ENCODE measurements at regions of chr19 and their contacts with region 1.

Region 1: DNA sequence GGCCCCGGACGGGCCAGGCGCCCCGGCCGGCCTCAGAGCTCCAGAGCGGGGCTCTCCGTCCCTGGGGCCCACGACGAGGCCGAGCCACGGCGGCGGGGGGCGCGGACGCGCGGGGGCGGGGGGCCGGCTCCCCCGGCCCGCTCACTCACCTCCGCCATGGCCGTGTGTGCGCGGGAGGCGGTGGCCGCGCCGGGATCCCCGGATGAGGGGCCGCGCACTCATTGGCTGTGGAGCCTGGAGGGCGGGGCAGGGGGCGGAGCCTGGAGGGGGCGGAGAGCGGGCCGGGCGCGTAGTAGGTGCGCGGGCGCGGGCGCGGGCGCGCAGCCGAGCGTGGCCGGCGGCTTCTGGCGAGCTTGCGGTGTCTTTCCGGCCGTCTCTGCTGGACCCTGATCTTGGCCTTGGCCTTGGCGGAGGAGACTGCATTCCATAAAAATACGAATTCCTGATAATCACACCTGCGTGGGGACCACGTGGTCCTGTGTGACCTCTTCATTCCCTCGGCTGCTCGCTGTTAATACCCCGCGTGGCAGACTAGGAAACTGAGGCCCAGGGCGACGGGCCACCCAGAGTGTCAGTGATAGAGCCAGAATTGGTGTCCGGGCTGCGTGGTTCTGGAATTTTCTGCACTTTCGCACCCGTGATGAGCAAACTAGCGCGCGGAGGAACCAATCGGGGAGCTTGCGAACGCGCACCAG is at the start of gene MIER2:
- DNase-seq: peak; percentile 79 to 98 (median 90)

Region 2: DNA sequence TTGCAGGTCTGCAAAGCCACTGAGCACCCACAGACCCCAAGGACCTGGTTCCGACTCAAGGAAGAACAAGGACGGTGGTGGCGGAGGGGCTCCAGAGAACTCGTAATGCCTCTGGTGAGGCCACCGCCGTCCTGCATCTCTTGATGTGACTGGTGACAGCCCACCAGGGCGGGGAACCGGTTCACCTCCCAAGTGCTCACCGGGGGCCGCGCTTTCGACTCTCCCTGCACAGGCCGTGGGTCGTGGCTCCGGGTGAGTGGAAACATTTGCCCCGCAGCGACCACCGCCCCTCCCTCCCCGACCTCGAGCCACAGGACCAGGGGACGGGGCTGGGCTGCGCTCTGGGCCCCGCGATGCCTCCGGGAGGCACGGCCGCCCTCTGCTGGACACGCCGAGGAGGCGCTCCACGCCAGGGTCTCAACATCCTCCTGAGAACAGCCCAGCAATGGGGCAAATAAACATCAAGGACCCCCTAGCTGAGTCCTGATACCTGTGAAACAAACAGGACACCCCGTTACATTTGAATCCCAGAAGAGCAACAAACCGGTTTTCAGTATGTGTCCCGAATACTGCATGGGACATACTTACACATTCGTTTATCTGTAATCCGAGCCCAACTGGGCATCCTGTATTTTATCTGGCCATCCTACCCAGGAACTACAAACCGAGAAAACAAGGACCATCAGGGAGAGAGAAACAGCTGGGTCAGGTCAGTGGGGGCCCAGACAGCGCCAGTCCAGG is 49.7 kb before region 1 on chr19:
- intact Hi-C with region 1: loop called (anchors 10 kb)
- DNase-seq: peak in 3 of 10 donors; percentile 15 to 86 (median 73)

Region 3: GRCh38 chr19:488505-489417 is 144.0 kb after region 1 on chr19:
- intact Hi-C with region 1: loop called (anchors 10 kb)
- DNase-seq: peak; percentile 93 to 99 (median 94)